Colonic mucosa (tissue), 4 donors: ENCODE measurements at regions of chr15 and their contacts with region 1.

Region 1: GRCh38 chr15:72285927-72286516 is 13.7 kb upstream of the PARP6 start:
- DNase-seq: peak; percentile 46
- H3K4me3 ChIP-seq: no peak overlapping the region
- H3K27ac ChIP-seq: no peak overlapping the region
- H3K4me1 ChIP-seq: no peaks in the 10 kb centered on the region
- H3K27me3 ChIP-seq: no peaks in the 10 kb centered on the region
- CTCF ChIP-seq: peak; percentile 59

Region 2: DNA sequence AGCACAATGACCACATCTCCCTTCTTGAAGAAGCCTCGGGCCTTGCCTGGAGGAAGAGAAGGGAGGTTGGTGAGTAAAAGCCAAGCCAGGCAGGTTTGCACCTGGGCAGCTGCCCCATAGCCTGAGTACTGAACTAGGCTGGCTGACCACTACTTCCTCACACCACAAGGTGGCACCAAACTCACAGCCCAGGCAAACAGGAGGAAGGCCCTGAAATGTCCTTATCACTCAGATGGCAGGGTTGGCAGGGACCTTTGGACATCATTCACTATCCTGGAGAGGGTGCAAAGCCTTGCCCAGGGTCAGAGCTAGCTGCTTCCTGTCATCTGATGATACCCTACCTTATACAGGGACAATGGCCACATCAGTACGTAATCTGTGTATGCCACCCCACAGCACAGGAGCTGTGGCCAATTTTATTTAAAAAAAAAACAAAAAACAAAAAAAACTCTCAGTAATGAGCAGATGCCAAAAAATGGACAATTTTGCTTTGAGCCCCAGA is 86.3 kb before region 1 on chr15:
- intact Hi-C with region 1: loop called (anchors 5 kb)
- DNase-seq: peak; percentile 88
- H3K4me3 ChIP-seq: no peak overlapping the region
- H3K27ac ChIP-seq: no peak overlapping the region
- H3K4me1 ChIP-seq: no peaks in the 10 kb centered on the region
- H3K27me3 ChIP-seq: peaks cover 4% of the 10 kb centered on the region
- CTCF ChIP-seq: peak; percentile 96

Region 3: DNA sequence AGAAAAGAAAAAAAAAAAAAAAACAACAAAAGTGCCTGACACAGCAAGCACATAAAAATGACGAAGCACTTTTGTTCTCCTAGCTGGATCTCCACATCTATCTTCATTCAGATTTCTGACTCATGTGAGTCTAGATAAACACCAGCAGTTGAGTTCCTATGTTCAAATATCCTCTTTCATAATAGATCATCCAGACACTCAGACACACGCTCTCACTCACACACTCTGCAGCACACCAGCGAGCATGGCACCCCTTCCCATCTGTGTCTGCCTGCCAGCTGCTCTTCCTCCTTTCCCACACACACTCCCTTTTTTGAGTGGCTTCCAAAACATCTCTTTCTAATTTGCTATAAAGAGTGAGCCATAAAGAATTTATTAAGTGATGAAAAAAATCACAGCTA is 53.8 kb after region 1 on chr15:
- intact Hi-C with region 1: no loop called
- DNase-seq: no peak
- H3K4me3 ChIP-seq: no peak overlapping the region
- H3K27ac ChIP-seq: peak overlapping the region; percentile 25
- H3K4me1 ChIP-seq: no peaks in the 10 kb centered on the region
- H3K27me3 ChIP-seq: no peaks in the 10 kb centered on the region
- CTCF ChIP-seq: no peak